ENCODE measurements at regions of chr6 and their contacts with region 1.

Region 1: DNA sequence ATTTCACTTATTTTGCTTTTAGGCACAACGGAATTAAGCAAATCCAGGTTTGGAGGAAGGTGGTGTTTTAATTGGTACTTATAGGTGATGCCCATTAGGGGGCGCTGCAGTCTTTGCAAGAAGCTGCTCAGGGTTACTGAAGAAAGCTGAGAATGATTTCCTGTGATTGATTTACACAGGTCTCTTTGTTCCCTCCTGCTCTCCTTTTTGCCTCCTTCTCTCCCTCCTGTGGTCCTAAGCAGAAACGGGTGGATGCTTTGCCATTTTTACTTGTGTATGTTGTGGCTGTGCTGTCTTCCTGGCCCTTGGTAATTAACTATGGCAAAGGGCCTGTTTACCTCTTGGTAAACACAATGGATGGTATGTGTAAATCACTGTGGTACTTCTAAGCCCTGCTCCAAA is 97.8 kb downstream of the ANKS1A start:
- DNase-seq: peak in 34 of 35 experiments; percentile 13 to 75 (median 50)
- ATAC-seq: peak in 2 of 4 experiments; percentile 26 to 44
- H3K4me3 ChIP-seq: no peak overlapping the region
- H3K4me3 Mint-ChIP-seq: no peak overlapping the region
- H3K27ac ChIP-seq: no peak overlapping the region
- H3K27ac Mint-ChIP-seq: no peak overlapping the region
- H3K4me1 ChIP-seq: no peaks in the 10 kb centered on the region
- H3K4me1 Mint-ChIP-seq: no peaks in the 10 kb centered on the region
- H3K27me3 ChIP-seq: no peaks in the 10 kb centered on the region
- H3K27me3 Mint-ChIP-seq: no peaks in the 10 kb centered on the region

Region 2: DNA sequence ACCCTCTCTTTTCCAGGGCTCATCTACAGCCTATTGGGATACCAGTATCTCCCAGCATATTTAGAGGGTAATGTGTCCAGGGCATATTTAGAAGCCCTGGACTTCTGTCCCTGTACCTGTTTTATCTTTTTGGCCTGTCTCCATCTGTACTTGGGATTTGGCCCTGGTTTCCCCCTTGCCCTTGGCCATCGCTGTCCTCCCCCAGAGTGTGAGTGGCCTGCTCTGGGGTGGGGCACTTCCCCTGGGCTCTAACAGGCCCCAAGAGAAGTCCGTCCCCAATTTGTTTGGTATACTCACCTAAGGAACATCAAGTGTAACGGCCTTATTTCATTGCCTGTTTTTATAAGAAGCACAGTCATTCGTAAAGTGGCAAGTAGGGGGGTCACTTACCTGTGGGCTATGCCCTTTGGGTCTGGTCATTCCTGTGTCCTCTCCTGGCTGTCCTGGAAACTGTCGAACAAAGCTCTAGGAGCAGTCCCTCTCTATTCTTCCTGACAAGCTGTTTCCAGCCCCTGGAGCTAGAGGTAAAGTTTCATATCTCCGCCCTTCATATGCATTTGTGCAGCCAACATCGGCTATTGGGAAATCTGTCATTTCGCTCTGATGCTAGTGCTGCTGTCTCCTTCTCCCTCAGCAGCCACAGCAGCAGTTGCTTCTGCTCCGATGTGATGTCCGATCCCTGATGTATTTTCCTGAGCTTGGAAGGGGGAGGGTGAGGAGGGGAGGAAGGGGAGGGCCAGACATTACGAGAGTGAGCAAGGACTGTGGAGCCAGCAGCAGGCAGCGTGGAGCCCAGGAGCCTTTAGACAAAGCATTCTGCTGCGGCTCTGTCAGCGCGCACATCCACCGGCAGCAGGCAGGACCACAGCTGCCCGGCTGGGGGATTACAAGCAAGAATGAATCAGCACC is 70.9 kb after region 1 on chr6:
- CTCF ChIA-PET with region 1: no interaction called
- POLR2A ChIA-PET with region 1: no interaction called
- DNase-seq: no peak
- ATAC-seq: no peak
- H3K4me3 ChIP-seq: no peak overlapping the region
- H3K4me3 Mint-ChIP-seq: no peak overlapping the region
- H3K27ac ChIP-seq: no peak overlapping the region
- H3K27ac Mint-ChIP-seq: no peak overlapping the region
- H3K4me1 ChIP-seq: peaks cover 0 to 12% of the 10 kb centered on the region in 2 experiments
- H3K4me1 Mint-ChIP-seq: peaks cover 5 to 11% (median 5%) of the 10 kb centered on the region in 3 donors
- H3K27me3 ChIP-seq: no peaks in the 10 kb centered on the region
- H3K27me3 Mint-ChIP-seq: no peaks in the 10 kb centered on the region

Region 3: DNA sequence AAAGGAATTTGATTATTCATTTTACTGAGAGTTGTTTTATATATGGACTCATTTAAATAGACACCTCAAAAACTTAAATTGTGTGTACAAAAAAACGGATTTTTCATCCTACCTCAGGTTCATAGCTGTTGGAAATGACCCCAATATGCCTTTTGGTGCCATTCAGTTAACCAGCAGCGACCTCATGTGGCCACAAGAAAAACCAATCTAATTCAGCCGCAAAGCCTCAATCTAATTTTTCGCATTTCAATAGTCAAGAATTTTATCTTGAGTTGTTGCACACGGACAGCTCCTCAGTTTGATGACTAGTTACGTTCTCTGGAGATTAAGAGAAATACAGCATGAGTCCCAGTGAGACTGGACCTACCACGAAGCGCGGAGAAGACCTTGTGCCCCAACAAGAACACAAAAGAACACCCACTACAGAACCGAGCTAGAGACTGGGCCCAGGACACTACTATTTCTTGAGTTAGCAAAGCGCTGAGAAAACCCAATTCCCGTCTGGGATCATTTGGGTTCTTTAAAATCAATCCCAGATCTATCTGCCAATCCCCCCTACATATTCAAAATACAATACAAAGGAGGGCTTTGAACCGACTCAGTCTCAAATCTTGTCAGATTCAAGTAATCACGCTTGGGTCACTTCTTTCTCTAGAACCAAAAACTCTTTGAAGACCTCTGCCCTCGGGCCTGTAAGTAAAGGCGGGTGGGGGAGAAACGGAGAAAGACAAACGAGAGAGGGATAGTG is 153.2 kb after region 1 on chr6:
- CTCF ChIA-PET with region 1: interaction called in 1 of 2 experiments, 14 read pairs
- POLR2A ChIA-PET with region 1: no interaction called
- DNase-seq: peak in 29 of 35 experiments; percentile 9 to 80 (median 30)
- ATAC-seq: peak in 1 of 4 experiments; percentile 46
- H3K4me3 ChIP-seq: no peak overlapping the region
- H3K4me3 Mint-ChIP-seq: peak overlapping the region; percentile 1 to 49 (median 29)
- H3K27ac ChIP-seq: no peak overlapping the region
- H3K27ac Mint-ChIP-seq: peak overlapping the region in 1 of 2 donors; percentile 20
- H3K4me1 ChIP-seq: peaks cover 0 to 18% of the 10 kb centered on the region in 2 experiments
- H3K4me1 Mint-ChIP-seq: peaks cover 12 to 17% (median 13%) of the 10 kb centered on the region in 3 donors
- H3K27me3 ChIP-seq: peaks cover 0 to 16% of the 10 kb centered on the region in 2 experiments
- H3K27me3 Mint-ChIP-seq: peaks cover 20% of the 10 kb centered on the region in 2 donors

Region 4: GRCh38 chr6:35206346-35206745 is 219.5 kb after region 1 on chr6:
- CTCF ChIA-PET with region 1: interaction called in 1 of 2 experiments, 11 read pairs
- POLR2A ChIA-PET with region 1: no interaction called
- DNase-seq: no peak
- ATAC-seq: no peak
- H3K4me3 ChIP-seq: no peak overlapping the region
- H3K4me3 Mint-ChIP-seq: no peak overlapping the region
- H3K27ac ChIP-seq: no peak overlapping the region
- H3K27ac Mint-ChIP-seq: no peak overlapping the region
- H3K4me1 ChIP-seq: no peaks in the 10 kb centered on the region
- H3K4me1 Mint-ChIP-seq: no peaks in the 10 kb centered on the region
- H3K27me3 ChIP-seq: peaks cover 5 to 52% of the 10 kb centered on the region in 2 experiments
- H3K27me3 Mint-ChIP-seq: peaks cover 75 to 77% of the 10 kb centered on the region in 2 donors

Region 5: DNA sequence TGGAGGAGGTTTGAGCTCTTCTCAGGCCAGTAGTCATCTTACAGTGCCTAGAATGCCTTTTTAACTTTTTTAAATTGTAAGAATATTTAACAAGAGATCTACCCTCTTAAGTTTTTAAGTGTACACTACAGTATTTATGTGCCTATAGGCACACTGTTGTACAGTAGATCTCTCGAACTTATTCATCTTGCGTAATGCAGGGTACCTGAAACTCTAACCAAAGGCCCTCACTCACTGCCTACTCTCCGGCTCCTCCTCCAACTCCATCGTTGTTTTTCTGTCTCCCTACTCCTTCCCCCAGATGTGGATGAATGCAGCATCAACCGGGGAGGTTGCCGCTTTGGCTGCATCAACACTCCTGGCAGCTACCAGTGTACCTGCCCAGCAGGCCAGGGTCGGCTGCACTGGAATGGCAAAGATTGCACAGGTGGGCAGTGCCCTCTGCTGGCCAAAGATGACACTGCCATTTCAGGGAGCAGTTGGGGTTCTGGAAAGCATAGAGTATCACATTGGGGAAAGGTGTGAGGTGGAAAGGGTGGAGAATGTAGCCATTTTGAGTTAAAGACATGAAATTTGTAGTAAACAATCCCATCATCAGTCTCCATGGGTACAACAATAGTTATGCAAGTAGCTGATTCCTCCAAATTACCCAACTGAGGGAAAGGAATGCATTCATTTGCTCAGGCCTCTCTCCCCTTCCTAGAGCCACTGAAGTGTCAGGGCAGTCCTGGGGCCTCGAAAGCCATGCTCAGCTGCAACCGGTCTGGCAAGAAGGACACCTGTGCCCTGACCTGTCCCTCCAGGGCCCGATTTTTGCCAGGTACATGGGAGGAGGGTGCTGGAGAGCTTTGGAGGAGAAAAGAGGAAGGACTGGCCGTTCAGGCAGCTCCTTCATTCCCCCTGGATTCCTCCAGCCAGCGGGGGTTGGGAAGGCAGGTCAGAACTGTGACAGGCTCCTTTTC is 254.3 kb after region 1 on chr6:
- CTCF ChIA-PET with region 1: interaction called, 11 to 13 read pairs
- POLR2A ChIA-PET with region 1: no interaction called
- DNase-seq: peak; percentile 12 to 79 (median 61)
- ATAC-seq: peak; percentile 82 to 90 (median 84)
- H3K4me3 ChIP-seq: no peak overlapping the region
- H3K4me3 Mint-ChIP-seq: no peak overlapping the region
- H3K27ac ChIP-seq: no peak overlapping the region
- H3K27ac Mint-ChIP-seq: no peak overlapping the region
- H3K4me1 ChIP-seq: peaks cover 0 to 2% of the 10 kb centered on the region in 2 experiments
- H3K4me1 Mint-ChIP-seq: peaks cover 2 to 11% (median 3%) of the 10 kb centered on the region in 3 donors
- H3K27me3 ChIP-seq: peaks cover 0 to 3% of the 10 kb centered on the region in 2 experiments
- H3K27me3 Mint-ChIP-seq: no peaks in the 10 kb centered on the region

Region 6: DNA sequence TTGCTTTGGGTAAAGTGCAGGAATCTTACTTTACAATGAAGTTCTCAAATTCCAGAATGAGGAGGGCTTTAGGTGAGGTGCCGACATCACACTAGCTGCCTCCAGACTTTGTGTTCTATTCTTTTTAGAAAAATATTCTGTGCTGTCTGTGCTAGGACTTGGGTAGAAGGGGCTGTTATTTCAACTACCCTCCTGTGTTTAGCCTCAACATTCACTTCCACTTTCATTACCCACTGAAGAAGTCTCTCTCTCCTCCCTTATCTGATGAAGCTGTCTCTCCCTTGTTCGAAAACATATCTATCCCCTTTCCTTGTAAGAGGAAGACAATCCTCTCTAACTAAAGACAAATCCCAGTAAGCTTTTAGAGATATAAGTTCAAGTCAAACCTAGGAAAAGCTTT is 1184.7 kb after region 1 on chr6:
- CTCF ChIA-PET with region 1: no interaction called
- POLR2A ChIA-PET with region 1: interaction called in 1 of 2 experiments, 11 read pairs
- DNase-seq: no peak
- ATAC-seq: no peak
- H3K4me3 ChIP-seq: no peak overlapping the region
- H3K4me3 Mint-ChIP-seq: no peak overlapping the region
- H3K27ac ChIP-seq: no peak overlapping the region
- H3K27ac Mint-ChIP-seq: peak overlapping the region; percentile 15 to 68
- H3K4me1 ChIP-seq: no peaks in the 10 kb centered on the region
- H3K4me1 Mint-ChIP-seq: peaks cover 15 to 18% (median 16%) of the 10 kb centered on the region in 3 donors
- H3K27me3 ChIP-seq: no peaks in the 10 kb centered on the region
- H3K27me3 Mint-ChIP-seq: no peaks in the 10 kb centered on the region

Measured in T-cell (primary cell).